ENCODE measurements at regions of chr6 and their contacts with region 1.

Region 1: GRCh38 chr6:25035527-25036435 is 100.0 kb upstream of the RIPOR2 start:
- DNase-seq: peak in 1 of 2 donors; percentile 59
- ATAC-seq: peak; percentile 48 to 73 (median 59)
- H3K4me3 ChIP-seq: peak overlapping the region; percentile 41
- H3K4me3 Mint-ChIP-seq: peak overlapping the region; percentile 91
- H3K27ac ChIP-seq: peak overlapping the region; percentile 81
- H3K27ac Mint-ChIP-seq: peak overlapping the region; percentile 99 to 100
- H3K4me1 ChIP-seq: peaks cover 48% of the 10 kb centered on the region
- H3K4me1 Mint-ChIP-seq: peaks cover 53 to 74% of the 10 kb centered on the region in 2 donors
- H3K27me3 ChIP-seq: no peaks in the 10 kb centered on the region
- H3K27me3 Mint-ChIP-seq: no peaks in the 10 kb centered on the region
- CTCF ChIP-seq: no peak

Region 2: DNA sequence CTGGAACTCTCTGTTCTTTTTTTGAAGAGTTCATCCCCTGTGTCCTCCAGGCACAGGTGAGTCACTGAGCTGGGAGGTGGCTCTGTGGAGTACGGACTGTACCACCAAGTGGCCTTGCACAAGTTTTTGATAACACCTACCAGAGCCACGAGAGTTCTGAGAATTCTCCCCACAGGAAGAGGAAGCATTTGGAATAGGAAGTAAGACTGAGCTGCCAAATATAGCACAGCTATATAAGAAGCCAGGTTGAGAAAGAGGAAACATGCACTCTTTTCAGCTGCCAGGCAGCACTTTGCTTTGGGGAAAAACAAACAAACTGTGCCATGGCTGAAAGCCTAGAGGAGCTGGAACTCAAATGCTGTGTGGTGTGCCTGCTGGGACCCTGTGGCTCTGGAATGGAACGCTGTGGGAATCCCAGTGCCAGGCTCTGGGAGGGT is 29.2 kb before region 1 on chr6:
- intact Hi-C with region 1: no loop called
- DNase-seq: peak in 1 of 2 donors; percentile 62
- ATAC-seq: peak; percentile 21 to 78 (median 34)
- H3K4me3 ChIP-seq: no peak overlapping the region
- H3K4me3 Mint-ChIP-seq: peak overlapping the region; percentile 83
- H3K27ac ChIP-seq: peak overlapping the region; percentile 86
- H3K27ac Mint-ChIP-seq: peak overlapping the region; percentile 91 to 95
- H3K4me1 ChIP-seq: peaks cover 51% of the 10 kb centered on the region
- H3K4me1 Mint-ChIP-seq: peaks cover 74 to 81% of the 10 kb centered on the region in 2 donors
- H3K27me3 ChIP-seq: no peaks in the 10 kb centered on the region
- H3K27me3 Mint-ChIP-seq: no peaks in the 10 kb centered on the region
- CTCF ChIP-seq: no peak

Region 3: DNA sequence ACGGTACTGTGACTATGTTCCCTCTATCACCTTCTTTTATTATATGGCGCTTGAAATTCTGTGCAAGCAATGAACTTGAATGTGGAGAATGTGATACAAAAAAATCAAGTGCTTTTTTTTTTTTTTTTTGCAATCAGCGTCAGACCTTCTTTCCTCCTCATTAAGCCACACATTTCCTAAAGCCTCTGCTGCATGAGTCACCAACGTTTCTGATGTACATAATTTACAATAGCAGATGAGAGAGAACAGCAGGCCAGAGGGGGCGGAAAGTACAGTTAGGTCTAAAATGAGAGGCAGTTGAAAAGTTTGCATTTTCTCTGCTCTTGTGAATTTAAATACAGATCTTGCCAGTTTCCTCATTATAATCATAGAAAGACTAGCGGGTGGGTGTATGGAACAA is 14.6 kb after region 1 on chr6:
- intact Hi-C with region 1: loop called (anchors 2 kb)
- DNase-seq: peak in 1 of 2 donors; percentile 81
- ATAC-seq: peak; percentile 85 to 89 (median 86)
- H3K4me3 ChIP-seq: no peak overlapping the region
- H3K4me3 Mint-ChIP-seq: peak overlapping the region; percentile 62
- H3K27ac ChIP-seq: peak overlapping the region; percentile 46
- H3K27ac Mint-ChIP-seq: peak overlapping the region; percentile 67 to 84
- H3K4me1 ChIP-seq: peaks cover 30% of the 10 kb centered on the region
- H3K4me1 Mint-ChIP-seq: peaks cover 38 to 43% of the 10 kb centered on the region in 2 donors
- H3K27me3 ChIP-seq: no peaks in the 10 kb centered on the region
- H3K27me3 Mint-ChIP-seq: no peaks in the 10 kb centered on the region
- CTCF ChIP-seq: no peak

Measured in natural killer cell (primary cell).